A549 (cell line): ENCODE measurements at regions of chr1 and their contacts with region 1.

Region 1: GRCh38 chr1:244322791-244323521 is 128.8 kb downstream of the ADSS2 start:
- DNase-seq: peak; percentile 76 to 87
- ATAC-seq: peak; percentile 87 to 94
- H3K4me3 ChIP-seq: no peak overlapping the region
- H3K27ac ChIP-seq: peak overlapping the region; percentile 73 to 75
- H3K4me1 ChIP-seq: peaks cover 42% of the 10 kb centered on the region
- CTCF ChIP-seq: no peak
- EP300 ChIP-seq: no peak
- POLR2A ChIP-seq: no peak
- RAD21 ChIP-seq: peak in 1 of 2 experiments; percentile 5; a peak in 1 of 5 replicates

Region 2: GRCh38 chr1:244296447-244296846 is 26.5 kb before region 1 on chr1:
- CTCF ChIA-PET with region 1: interaction called, 22 read pairs
- POLR2A ChIA-PET with region 1: no interaction called
- DNase-seq: no peak
- ATAC-seq: no peak
- H3K4me3 ChIP-seq: no peak overlapping the region
- H3K27ac ChIP-seq: peak overlapping the region; percentile 13 to 45; a peak in 4 of 6 replicates
- H3K4me1 ChIP-seq: peaks cover 5% of the 10 kb centered on the region; the same call in 2 of the 3 replicates
- CTCF ChIP-seq: no peak
- EP300 ChIP-seq: no peak
- POLR2A ChIP-seq: no peak
- RAD21 ChIP-seq: no peak

Region 3: DNA sequence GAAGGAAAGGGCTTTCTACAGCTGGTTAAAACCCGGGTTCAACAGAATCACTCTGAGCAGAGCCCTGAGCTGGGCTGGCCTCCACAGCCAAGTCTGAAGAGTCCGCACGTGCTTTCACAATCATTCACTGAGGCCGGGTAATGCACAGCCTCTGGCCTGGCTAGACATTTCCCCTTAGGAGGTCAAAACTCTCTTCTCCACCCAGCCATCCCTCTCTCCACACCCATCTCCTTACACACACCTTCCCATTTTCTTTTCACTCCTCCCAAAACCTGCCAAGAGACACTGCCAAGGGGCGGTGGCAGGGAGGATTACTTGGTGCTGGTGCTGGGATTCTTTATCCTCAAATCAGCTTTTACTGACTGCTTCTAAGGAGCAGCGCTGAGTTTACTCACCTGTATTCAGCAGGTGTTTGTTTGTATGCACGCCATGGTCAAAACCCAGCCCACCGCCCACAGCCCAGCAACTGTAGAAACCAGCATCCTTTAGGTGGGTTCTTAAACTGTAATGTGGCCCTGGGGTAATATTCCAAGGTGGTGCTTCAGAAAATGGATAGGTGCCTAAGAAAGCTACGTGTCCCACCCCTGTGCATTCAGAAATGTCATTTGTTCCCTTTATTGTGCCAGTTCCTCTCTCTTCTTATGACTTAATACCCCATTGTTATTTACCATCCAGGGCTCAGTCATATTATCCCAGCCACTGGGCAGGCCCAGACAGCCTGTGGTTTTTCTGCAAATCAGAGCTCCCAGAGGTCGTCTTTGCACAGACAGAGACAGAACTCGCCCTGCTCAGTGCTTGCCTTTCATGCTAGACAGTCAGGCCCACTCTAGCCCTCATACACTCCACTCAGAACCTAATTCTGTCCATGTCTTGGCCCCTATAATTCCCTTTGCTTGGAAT is 48.5 kb after region 1 on chr1:
- CTCF ChIA-PET with region 1: no interaction called
- POLR2A ChIA-PET with region 1: no interaction called
- DNase-seq: no peak
- ATAC-seq: peak; percentile 28 to 45; a peak in 4 of 6 replicates
- H3K4me3 ChIP-seq: no peak overlapping the region
- H3K27ac ChIP-seq: no peak overlapping the region
- H3K4me1 ChIP-seq: no peaks in the 10 kb centered on the region
- CTCF ChIP-seq: no peak
- EP300 ChIP-seq: no peak
- POLR2A ChIP-seq: no peak
- RAD21 ChIP-seq: no peak